ENCODE measurements at regions of chr1 and their contacts with region 1.

Region 1: GRCh38 chr1:209565759-209566678 is 17.5 kb upstream of the CAMK1G start:
- DNase-seq: peak; percentile 93
- H3K4me3 Mint-ChIP-seq: no peak overlapping the region
- H3K27ac Mint-ChIP-seq: no peak overlapping the region
- H3K4me1 Mint-ChIP-seq: peaks cover 23% of the 10 kb centered on the region
- H3K27me3 Mint-ChIP-seq: peaks cover 39% of the 10 kb centered on the region

Region 2: DNA sequence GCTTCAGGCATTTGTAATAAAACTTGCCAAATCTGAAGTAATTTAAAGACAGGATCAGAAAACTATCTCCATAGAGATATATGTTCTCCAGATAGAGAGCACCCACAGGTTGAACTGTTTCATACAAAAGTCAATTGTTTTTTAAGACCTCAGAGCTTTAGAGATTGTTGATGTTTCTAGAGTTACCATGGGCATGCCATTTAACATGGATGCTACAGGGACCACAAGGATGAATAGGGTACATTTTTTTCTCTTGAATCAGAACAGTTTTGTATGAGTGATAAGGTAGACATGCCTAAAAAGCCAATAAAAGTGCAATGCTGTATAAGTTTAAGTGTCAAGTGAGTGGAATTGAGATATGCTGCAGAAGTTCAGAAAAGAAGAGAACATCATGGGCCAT is 493.5 kb before region 1 on chr1:
- intact Hi-C with region 1: no loop called
- DNase-seq: no peak
- H3K4me3 Mint-ChIP-seq: no peak overlapping the region
- H3K27ac Mint-ChIP-seq: no peak overlapping the region
- H3K4me1 Mint-ChIP-seq: no peaks in the 10 kb centered on the region
- H3K27me3 Mint-ChIP-seq: no peaks in the 10 kb centered on the region

Region 3: GRCh38 chr1:209207701-209208286 is 358.2 kb before region 1 on chr1:
- intact Hi-C with region 1: loop called (anchors 1 kb)
- DNase-seq: peak; percentile 59
- H3K4me3 Mint-ChIP-seq: no peak overlapping the region
- H3K27ac Mint-ChIP-seq: no peak overlapping the region
- H3K4me1 Mint-ChIP-seq: peaks cover 2% of the 10 kb centered on the region
- H3K27me3 Mint-ChIP-seq: peaks cover 40% of the 10 kb centered on the region

Region 4: GRCh38 chr1:209248649-209249279 is 317.3 kb before region 1 on chr1:
- intact Hi-C with region 1: loop called (anchors 1 kb)
- DNase-seq: peak; percentile 84
- H3K4me3 Mint-ChIP-seq: no peak overlapping the region
- H3K27ac Mint-ChIP-seq: no peak overlapping the region
- H3K4me1 Mint-ChIP-seq: no peaks in the 10 kb centered on the region
- H3K27me3 Mint-ChIP-seq: no peaks in the 10 kb centered on the region

Region 5: DNA sequence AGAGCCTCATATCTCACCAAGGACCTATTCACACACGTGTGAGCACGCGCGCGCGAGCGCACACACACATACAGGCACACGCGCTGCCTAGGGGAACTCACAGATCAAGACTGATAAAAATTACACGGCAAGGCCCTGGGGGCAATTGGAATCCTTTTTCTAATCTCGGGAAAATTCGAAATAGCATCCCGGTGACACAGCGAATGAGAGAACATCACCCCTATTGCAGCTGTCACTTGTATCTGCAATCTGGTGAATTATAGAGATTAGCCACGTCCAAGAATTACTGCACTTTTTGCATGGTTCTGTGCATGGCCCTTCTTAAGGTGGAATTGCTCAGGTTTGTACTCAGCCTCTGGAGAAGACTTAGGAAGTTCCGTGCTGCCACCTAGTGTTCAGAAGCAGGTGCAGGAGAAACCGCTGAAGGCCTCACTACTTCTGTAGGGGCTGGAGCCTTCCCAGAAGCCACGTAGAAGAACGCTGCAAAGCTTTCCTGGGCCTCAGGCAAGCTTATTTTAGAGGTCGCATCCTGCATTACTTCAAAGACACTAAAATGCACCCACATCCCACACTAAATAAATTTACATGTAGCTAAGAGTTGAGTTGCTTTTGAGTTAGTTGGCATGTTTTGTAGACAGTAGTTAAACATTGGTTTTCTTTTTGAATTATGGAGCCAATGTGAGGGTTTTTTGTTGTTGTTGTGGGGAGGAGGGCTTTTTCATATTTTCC is 211.7 kb before region 1 on chr1:
- intact Hi-C with region 1: loop called (anchors 10 kb)
- DNase-seq: peak; percentile 85
- H3K4me3 Mint-ChIP-seq: no peak overlapping the region
- H3K27ac Mint-ChIP-seq: no peak overlapping the region
- H3K4me1 Mint-ChIP-seq: no peaks in the 10 kb centered on the region
- H3K27me3 Mint-ChIP-seq: peaks cover 2% of the 10 kb centered on the region

Region 6: DNA sequence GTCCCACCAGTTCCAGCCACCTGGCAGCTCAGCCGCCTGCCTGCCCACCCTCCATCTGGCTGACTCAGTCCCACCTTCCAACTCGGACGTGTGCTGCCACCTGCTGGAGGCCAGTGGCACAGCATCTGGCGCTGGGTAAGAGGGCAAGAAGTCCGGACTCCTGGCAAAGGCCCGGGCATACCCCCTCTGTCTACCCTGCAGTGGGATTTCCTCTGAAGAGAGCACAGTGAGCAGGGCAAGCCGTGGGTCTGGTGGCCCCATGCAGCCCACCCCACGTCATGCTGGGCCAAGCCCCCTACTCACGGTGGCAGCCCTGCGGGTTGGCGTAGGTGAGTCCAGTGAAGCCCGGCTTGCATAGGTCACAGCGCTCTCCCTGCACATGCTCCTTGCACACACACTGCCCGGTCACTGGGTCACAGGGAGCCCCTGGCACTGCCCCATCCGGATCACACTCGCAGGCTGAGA is 61.7 kb after region 1 on chr1:
- intact Hi-C with region 1: loop called (anchors 2 kb)
- DNase-seq: peak; percentile 94
- H3K4me3 Mint-ChIP-seq: no peak overlapping the region
- H3K27ac Mint-ChIP-seq: peak overlapping the region; percentile 38
- H3K4me1 Mint-ChIP-seq: peaks cover 8% of the 10 kb centered on the region
- H3K27me3 Mint-ChIP-seq: no peaks in the 10 kb centered on the region

Region 7: DNA sequence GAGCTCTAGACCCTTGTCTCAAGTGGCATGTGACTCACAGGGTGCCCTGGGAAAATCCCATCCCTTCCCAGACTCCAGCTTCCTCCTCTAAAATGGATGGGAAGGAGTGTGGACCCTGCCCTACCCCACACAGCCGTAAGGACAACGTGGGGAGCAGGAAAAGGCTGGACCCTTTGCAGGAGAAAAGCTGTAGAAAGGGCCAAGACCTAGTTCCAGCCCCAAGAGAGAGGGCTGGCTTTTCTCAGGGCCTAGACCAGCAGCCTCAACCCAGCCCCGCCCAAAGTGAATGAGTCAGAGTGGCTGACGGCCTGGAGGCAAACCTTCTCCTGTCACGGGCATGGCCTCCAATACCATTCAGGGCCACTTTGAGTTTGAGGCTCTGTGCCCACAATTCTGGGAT is 85.1 kb after region 1 on chr1:
- intact Hi-C with region 1: no loop called
- DNase-seq: peak; percentile 92
- H3K4me3 Mint-ChIP-seq: peak overlapping the region; percentile 56
- H3K27ac Mint-ChIP-seq: peak overlapping the region; percentile 73
- H3K4me1 Mint-ChIP-seq: peaks cover 64% of the 10 kb centered on the region
- H3K27me3 Mint-ChIP-seq: no peaks in the 10 kb centered on the region

Region 8: GRCh38 chr1:209827384-209828262 is 261.6 kb after region 1 on chr1 and contains the start of gene UTP25:
- intact Hi-C with region 1: loop called (anchors 5 kb)
- DNase-seq: peak; percentile 98
- H3K4me3 Mint-ChIP-seq: peak within 1 kb of the TSS; percentile 93
- H3K27ac Mint-ChIP-seq: peak within 1 kb of the TSS; percentile 86
- H3K4me1 Mint-ChIP-seq: peaks cover 43% of the 10 kb centered on the region
- H3K27me3 Mint-ChIP-seq: peaks cover 4% of the 10 kb centered on the region
- total RNA-seq, gene UTP25: 17.2 and 17.6 TPM in 2 replicates

Measured in activated CD4-positive, alpha-beta T cell treated with anti-CD3 and anti-CD28 coated beads, Interleukin-2, amount 10 ng/mL, durations not matched to agents 24 days and 14 days (primary cell).